ENCODE measurements at regions of chr12 and their contacts with region 1.

Region 1: GRCh38 chr12:100234598-100235304 is 32.1 kb downstream of the DEPDC4 start:
- DNase-seq: peak; percentile 42
- CTCF ChIP-seq: peak; percentile 74

Region 2: GRCh38 chr12:99898656-99899055 is 336.1 kb before region 1 on chr12:
- in situ Hi-C with region 1: no loop called
- DNase-seq: no peak
- CTCF ChIP-seq: no peak

Region 3: GRCh38 chr12:100061814-100062213 is 172.9 kb before region 1 on chr12:
- in situ Hi-C with region 1: no loop called
- DNase-seq: no peak
- CTCF ChIP-seq: no peak

Region 4: DNA sequence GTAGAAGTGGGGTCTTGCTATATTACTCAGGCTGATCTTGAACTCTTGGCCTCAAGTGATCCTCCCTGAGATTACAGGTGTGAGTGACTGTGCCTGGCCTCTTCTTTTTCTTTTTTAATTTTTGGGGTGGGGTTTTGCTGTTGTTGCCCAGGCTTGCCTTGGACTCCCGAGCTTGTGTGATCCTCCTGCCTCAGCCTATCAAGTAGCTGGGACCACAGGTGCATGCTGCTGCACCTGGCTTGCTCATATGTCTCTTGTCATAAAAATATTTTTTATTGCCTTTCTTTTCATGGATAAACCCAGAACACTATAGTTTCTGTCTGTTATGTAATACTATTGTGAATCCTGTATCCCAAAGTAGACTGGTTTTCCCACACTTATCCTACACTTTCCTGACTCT is 58.3 kb after region 1 on chr12:
- in situ Hi-C with region 1: no loop called
- DNase-seq: no peak
- CTCF ChIP-seq: no peak

Region 5: DNA sequence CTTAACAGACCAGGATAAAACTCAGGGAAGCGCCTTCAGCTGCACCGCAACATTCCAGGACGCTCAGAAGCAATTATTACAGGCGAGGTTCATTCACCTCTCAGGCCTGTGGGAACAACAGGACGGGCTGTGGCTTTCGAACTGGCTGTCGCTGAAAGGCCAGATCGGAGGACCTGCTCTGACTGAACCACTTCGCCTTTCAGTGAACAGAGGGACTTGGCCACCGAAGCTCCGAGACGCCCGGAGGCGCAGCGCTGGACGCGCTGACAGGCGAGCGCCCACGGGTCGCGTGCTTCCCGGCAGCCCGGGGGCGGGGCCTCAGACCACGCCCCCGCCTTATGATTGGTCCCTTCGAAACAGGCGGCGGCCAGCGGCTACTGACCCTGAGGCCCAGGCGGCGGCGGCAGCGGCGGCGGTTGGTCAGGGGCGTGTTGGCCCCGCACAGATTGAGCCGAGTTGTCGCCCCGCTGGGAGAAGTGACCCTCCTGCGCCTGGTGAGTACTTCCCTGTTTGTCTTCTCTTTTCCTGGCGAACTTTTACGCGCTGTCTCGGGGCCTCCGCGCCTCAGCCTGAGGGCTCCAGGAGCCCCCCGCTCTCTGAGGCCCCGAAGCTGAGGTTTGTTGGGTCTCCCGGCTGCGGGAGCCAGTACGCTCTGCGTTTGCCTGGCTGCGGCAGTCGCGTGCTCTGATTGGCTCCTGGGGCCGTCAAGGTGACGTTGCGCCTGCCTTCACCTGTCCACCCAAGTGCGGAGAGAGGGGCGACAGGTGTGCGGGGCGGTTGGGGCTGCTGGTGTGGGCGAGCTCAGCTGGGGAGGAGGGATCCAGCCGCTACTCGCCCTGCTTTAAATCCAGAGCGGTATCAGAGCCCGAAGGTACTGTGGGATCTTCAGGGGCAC is 338.8 kb after region 1 on chr12 and contains the start of gene GAS2L3:
- in situ Hi-C with region 1: loop called (anchors 25 kb)
- DNase-seq: peak; percentile 87
- CTCF ChIP-seq: no peak

Region 6: GRCh38 chr12:100733817-100734593 is 499.3 kb after region 1 on chr12:
- in situ Hi-C with region 1: loop called (anchors 25 kb)
- DNase-seq: no peak
- CTCF ChIP-seq: peak; percentile 42